ENCODE measurements at regions of chrX and their contacts with region 1.

Region 1: GRCh38 chrX:119226446-119226845 is 9.6 kb upstream of the PGRMC1 start:
- DNase-seq: no peak
- H3K4me3 ChIP-seq: no peak overlapping the region
- H3K27ac ChIP-seq: no peak overlapping the region
- H3K4me1 ChIP-seq: no peaks in the 10 kb centered on the region
- H3K27me3 ChIP-seq: no peaks in the 10 kb centered on the region
- CTCF ChIP-seq: no peak

Region 2: GRCh38 chrX:119168104-119168503 is 58.3 kb before region 1 on chrX:
- CTCF ChIA-PET with region 1: no interaction called
- POLR2A ChIA-PET with region 1: no interaction called
- intact Hi-C with region 1: no loop called
- DNase-seq: no peak
- H3K4me3 ChIP-seq: no peak overlapping the region
- H3K27ac ChIP-seq: no peak overlapping the region
- H3K4me1 ChIP-seq: no peaks in the 10 kb centered on the region
- H3K27me3 ChIP-seq: no peaks in the 10 kb centered on the region
- CTCF ChIP-seq: no peak

Region 3: DNA sequence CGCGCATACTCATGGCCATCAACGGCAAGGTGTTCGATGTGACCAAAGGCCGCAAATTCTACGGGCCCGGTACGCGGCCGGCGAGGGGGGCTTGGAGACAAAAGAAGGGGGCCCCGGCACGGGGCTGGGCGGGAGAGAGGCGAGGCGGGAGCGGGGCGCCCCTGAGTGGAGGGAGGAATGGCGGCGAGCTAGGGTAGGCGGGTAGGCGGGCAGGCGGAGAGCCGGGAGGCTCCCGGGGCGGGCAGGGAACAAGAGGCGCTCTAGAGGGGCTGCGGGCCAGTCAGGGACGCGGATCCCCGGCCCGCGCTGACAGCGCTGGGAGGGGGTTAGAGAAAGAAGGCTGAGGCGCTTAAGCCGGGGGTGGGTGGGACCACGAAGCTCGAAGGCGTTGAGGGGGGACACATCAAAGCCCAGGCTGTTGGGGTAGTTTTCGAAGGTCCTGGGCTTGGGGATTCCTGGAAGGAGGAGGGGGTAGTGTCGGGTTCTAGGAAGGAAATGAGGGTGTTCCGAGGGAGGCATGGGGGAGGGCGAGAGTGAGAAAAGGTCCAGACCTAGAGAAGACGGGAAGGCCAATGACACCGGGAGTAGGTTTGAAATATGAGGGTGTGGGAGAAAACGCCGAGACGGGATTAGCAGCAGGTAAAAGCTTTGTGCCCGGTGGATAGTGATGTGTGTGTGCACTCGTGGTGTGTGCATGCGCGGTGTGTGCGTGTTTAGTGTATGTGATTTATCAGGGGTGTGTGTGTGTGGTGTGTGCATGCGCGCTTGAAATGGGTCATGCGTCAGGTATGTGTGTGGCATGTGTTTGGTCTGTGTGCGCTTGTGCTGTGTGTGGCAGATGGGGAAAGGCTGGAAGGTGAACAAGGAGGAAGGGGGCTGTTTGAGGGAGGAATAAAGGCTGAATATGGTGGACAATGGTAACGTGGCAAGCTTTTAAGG is 10.4 kb after region 1 on chrX:
- CTCF ChIA-PET with region 1: no interaction called
- POLR2A ChIA-PET with region 1: no interaction called
- intact Hi-C with region 1: no loop called
- DNase-seq: no peak
- H3K4me3 ChIP-seq: peak overlapping the region; percentile 69
- H3K27ac ChIP-seq: peak overlapping the region; percentile 76
- H3K4me1 ChIP-seq: peaks cover 13% of the 10 kb centered on the region
- H3K27me3 ChIP-seq: no peaks in the 10 kb centered on the region
- CTCF ChIP-seq: no peak

Region 4: GRCh38 chrX:119288890-119289383 is 62.5 kb after region 1 on chrX:
- CTCF ChIA-PET with region 1: no interaction called
- POLR2A ChIA-PET with region 1: no interaction called
- intact Hi-C with region 1: loop called (anchors 2 kb)
- DNase-seq: no peak
- H3K4me3 ChIP-seq: no peak overlapping the region
- H3K27ac ChIP-seq: no peak overlapping the region
- H3K4me1 ChIP-seq: no peaks in the 10 kb centered on the region
- H3K27me3 ChIP-seq: no peaks in the 10 kb centered on the region
- CTCF ChIP-seq: peak; percentile 36

Measured in A673 (cell line).